ENCODE measurements at regions of chr3 and their contacts with region 1.

Region 1: GRCh38 chr3:33440323-33441232 is at the start of gene UBP1:
- DNase-seq: peak; percentile 87 to 100 (median 94)
- ATAC-seq: peak; percentile 84
- H3K4me3 ChIP-seq: peak within 1 kb of the TSS; percentile 60
- H3K4me3 Mint-ChIP-seq: peak within 1 kb of the TSS; percentile 93
- H3K27ac ChIP-seq: peak within 1 kb of the TSS; percentile 87 to 96
- H3K27ac Mint-ChIP-seq: peak within 1 kb of the TSS; percentile 98
- H3K4me1 ChIP-seq: peaks cover 23% of the 10 kb centered on the region
- H3K4me1 Mint-ChIP-seq: peaks cover 51% of the 10 kb centered on the region
- H3K27me3 ChIP-seq: no peaks in the 10 kb centered on the region
- H3K27me3 Mint-ChIP-seq: no peaks in the 10 kb centered on the region
- CTCF ChIP-seq: no peak
- total RNA-seq, gene UBP1: 59.5 to 61.6 TPM

Region 2: GRCh38 chr3:32684800-32685542 is 755.6 kb before region 1 on chr3 and contains the start of gene CNOT10:
- CTCF ChIA-PET with region 1: no interaction called
- POLR2A ChIA-PET with region 1: interaction called, 6 read pairs
- intact Hi-C with region 1: loop called in 1 of 2 experiments (anchors 5 kb)
- DNase-seq: peak; percentile 91 to 98 (median 94)
- ATAC-seq: peak; percentile 87
- H3K4me3 ChIP-seq: peak within 1 kb of the TSS; percentile 92
- H3K4me3 Mint-ChIP-seq: peak within 1 kb of the TSS; percentile 87
- H3K27ac ChIP-seq: peak within 1 kb of the TSS; percentile 74 to 82
- H3K27ac Mint-ChIP-seq: peak within 1 kb of the TSS; percentile 97
- H3K4me1 ChIP-seq: peaks cover 15% of the 10 kb centered on the region
- H3K4me1 Mint-ChIP-seq: peaks cover 41% of the 10 kb centered on the region
- H3K27me3 ChIP-seq: no peaks in the 10 kb centered on the region
- H3K27me3 Mint-ChIP-seq: no peaks in the 10 kb centered on the region
- CTCF ChIP-seq: no peak
- total RNA-seq, gene CNOT10: 31.3 to 42.0 TPM

Region 3: GRCh38 chr3:32960404-32961170 is 480.0 kb before region 1 on chr3:
- CTCF ChIA-PET with region 1: no interaction called
- POLR2A ChIA-PET with region 1: no interaction called
- intact Hi-C with region 1: loop called in 1 of 2 experiments (anchors 5 kb)
- DNase-seq: peak in 3 of 14 experiments; percentile 60 to 71 (median 66)
- ATAC-seq: no peak
- H3K4me3 ChIP-seq: no peak overlapping the region
- H3K4me3 Mint-ChIP-seq: peak overlapping the region; percentile 65
- H3K27ac ChIP-seq: no peak overlapping the region
- H3K27ac Mint-ChIP-seq: peak overlapping the region; percentile 80
- H3K4me1 ChIP-seq: peaks cover 30% of the 10 kb centered on the region
- H3K4me1 Mint-ChIP-seq: peaks cover 35% of the 10 kb centered on the region
- H3K27me3 ChIP-seq: no peaks in the 10 kb centered on the region
- H3K27me3 Mint-ChIP-seq: no peaks in the 10 kb centered on the region
- CTCF ChIP-seq: no peak

Region 4: DNA sequence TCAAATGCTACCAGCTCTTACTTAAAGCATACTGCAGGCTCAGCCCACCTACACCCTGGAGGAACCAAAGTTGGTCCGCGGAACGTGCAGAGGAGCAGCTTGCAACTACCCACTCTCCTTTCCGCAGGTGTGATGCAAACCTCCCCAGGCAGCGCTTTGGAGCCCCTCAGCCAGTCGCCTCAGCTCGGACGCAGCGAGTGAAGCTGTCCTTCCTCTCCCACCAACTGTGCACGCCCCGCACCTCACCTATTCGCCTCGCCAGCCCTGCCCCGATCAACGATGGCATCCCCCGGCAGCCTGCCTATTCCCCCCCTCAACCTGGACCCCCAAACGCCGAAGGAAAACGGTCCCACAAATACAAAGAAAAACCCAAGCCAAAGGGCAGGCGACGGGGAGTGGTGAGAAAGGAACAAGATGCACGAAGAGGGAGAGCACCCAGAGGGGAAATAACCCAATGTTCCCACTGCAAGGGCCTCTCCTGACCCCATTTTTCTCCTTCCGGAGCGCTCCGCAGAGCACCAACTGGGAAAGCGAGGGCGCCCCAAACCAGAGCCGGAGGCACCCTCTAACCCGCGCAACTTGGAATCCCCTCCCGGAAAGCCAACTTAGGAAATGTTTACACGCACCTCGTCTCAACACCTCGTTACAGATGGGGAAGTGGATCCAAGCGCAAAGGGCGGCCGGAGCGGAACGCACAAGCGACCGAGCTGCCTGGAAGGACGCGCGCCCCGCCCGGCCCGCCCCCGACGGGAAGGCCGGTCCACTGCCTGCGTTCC is 344.3 kb before region 1 on chr3:
- CTCF ChIA-PET with region 1: no interaction called
- POLR2A ChIA-PET with region 1: no interaction called
- intact Hi-C with region 1: loop called in 1 of 2 experiments (anchors 2 kb)
- DNase-seq: peak; percentile 29 to 71 (median 36)
- ATAC-seq: peak; percentile 53
- H3K4me3 ChIP-seq: peak overlapping the region; percentile 79
- H3K4me3 Mint-ChIP-seq: peak overlapping the region; percentile 97
- H3K27ac ChIP-seq: peak overlapping the region; percentile 15 to 35
- H3K27ac Mint-ChIP-seq: peak overlapping the region; percentile 83
- H3K4me1 ChIP-seq: peaks cover 46% of the 10 kb centered on the region
- H3K4me1 Mint-ChIP-seq: peaks cover 48% of the 10 kb centered on the region
- H3K27me3 ChIP-seq: no peaks in the 10 kb centered on the region
- H3K27me3 Mint-ChIP-seq: no peaks in the 10 kb centered on the region
- CTCF ChIP-seq: no peak

Region 5: GRCh38 chr3:33113772-33114621 is 326.6 kb before region 1 on chr3 and contains the start of gene CRTAP:
- CTCF ChIA-PET with region 1: no interaction called
- POLR2A ChIA-PET with region 1: interaction called, 8 read pairs
- intact Hi-C with region 1: loop called in 1 of 2 experiments (anchors 5 kb)
- DNase-seq: peak; percentile 74 to 94 (median 86)
- ATAC-seq: peak; percentile 78
- H3K4me3 ChIP-seq: peak within 1 kb of the TSS; percentile 76
- H3K4me3 Mint-ChIP-seq: peak within 1 kb of the TSS; percentile 95
- H3K27ac ChIP-seq: peak within 1 kb of the TSS; percentile 55 to 59
- H3K27ac Mint-ChIP-seq: peak within 1 kb of the TSS; percentile 87
- H3K4me1 ChIP-seq: peaks cover 20% of the 10 kb centered on the region
- H3K4me1 Mint-ChIP-seq: peaks cover 56% of the 10 kb centered on the region
- H3K27me3 ChIP-seq: no peaks in the 10 kb centered on the region
- H3K27me3 Mint-ChIP-seq: no peaks in the 10 kb centered on the region
- CTCF ChIP-seq: no peak
- total RNA-seq, gene CRTAP: 38.2 to 40.3 TPM

Region 6: GRCh38 chr3:33717866-33718594 is 277.5 kb after region 1 on chr3 and contains the start of gene CLASP2:
- CTCF ChIA-PET with region 1: no interaction called
- POLR2A ChIA-PET with region 1: interaction called, 9 read pairs
- intact Hi-C with region 1: loop called (anchors 5 kb)
- DNase-seq: peak; percentile 66 to 93 (median 78)
- ATAC-seq: peak; percentile 75
- H3K4me3 ChIP-seq: peak within 1 kb of the TSS; percentile 92
- H3K4me3 Mint-ChIP-seq: peak within 1 kb of the TSS; percentile 99
- H3K27ac ChIP-seq: peak within 1 kb of the TSS; percentile 84 to 88
- H3K27ac Mint-ChIP-seq: no peak within 1 kb of the TSS
- H3K4me1 ChIP-seq: peaks cover 14% of the 10 kb centered on the region
- H3K4me1 Mint-ChIP-seq: peaks cover 5% of the 10 kb centered on the region
- H3K27me3 ChIP-seq: peaks cover 0 to 2% of the 10 kb centered on the region in 2 experiments
- H3K27me3 Mint-ChIP-seq: no peaks in the 10 kb centered on the region
- CTCF ChIP-seq: no peak
- total RNA-seq, gene CLASP2: 63.4 to 73.1 TPM

Region 7: GRCh38 chr3:33798411-33799201 is 358.0 kb after region 1 on chr3 and contains the start of gene PDCD6IP:
- CTCF ChIA-PET with region 1: no interaction called
- POLR2A ChIA-PET with region 1: interaction called, 34 read pairs
- intact Hi-C with region 1: loop called (anchors 2 to 10 kb)
- DNase-seq: peak; percentile 76 to 94 (median 84)
- ATAC-seq: peak; percentile 75
- H3K4me3 ChIP-seq: peak within 1 kb of the TSS; percentile 82
- H3K4me3 Mint-ChIP-seq: peak within 1 kb of the TSS; percentile 99
- H3K27ac ChIP-seq: peak within 1 kb of the TSS; percentile 71 to 75
- H3K27ac Mint-ChIP-seq: peak within 1 kb of the TSS; percentile 93
- H3K4me1 ChIP-seq: peaks cover 26% of the 10 kb centered on the region
- H3K4me1 Mint-ChIP-seq: peaks cover 64% of the 10 kb centered on the region
- H3K27me3 ChIP-seq: no peaks in the 10 kb centered on the region
- H3K27me3 Mint-ChIP-seq: no peaks in the 10 kb centered on the region
- CTCF ChIP-seq: peak; percentile 23
- total RNA-seq, gene PDCD6IP: 109 to 112 TPM